ENCODE measurements at regions of chr1 and their contacts with region 1.

Region 1: GRCh38 chr1:8913111-8913856 is 32.4 kb upstream of the CA6 start:
- DNase-seq: no peak
- H3K4me3 ChIP-seq: no peak overlapping the region
- H3K4me3 Mint-ChIP-seq: no peak overlapping the region
- H3K27ac ChIP-seq: no peak overlapping the region
- H3K27ac Mint-ChIP-seq: peak overlapping the region in 1 of 7 donors; percentile 25
- H3K4me1 ChIP-seq: peaks cover 6 to 14% of the 10 kb centered on the region in 2 donors
- H3K4me1 Mint-ChIP-seq: peaks cover 20% of the 10 kb centered on the region
- H3K27me3 ChIP-seq: no peaks in the 10 kb centered on the region
- H3K27me3 Mint-ChIP-seq: peaks cover 0 to 4% (median 2%) of the 10 kb centered on the region in 3 donors
- CTCF ChIP-seq: no peak

Region 2: DNA sequence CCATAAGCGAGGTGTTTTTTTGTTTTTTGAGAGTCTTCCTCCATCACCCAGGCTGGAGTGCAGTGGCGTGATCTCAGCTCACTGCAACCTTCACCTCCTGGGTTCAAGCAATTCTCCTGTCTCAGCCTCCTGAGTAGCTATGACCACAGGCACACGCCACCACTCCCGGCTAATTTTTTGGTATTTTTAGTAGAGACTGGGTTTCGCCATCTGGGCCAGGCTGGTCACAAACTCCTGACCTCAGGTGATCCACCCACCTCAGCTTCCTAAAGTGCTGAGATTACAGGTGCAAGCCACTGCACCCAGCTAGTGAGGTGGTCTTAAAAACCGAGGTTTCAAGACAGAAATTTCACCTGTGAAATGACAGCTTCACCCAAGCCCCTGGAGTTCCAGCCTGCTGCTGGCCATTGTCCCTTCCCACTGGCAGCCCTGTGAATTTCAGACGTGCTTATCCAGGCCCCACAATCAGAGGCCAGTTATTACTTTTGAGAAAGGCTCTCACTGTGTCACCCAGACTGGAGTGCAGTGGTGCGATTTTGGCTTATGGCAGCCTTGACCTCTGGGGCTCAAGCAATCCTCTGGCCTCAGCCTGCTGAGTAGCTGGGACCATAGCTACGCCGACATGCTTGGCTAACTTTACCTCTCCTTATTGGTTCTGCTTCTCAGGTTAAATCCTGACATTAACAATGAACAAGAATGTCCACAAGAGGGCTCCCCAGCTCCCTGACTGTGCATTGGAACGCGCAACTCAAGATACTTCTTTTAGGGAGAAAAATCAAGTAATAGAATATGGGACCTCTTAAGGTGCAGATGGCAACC is 54.2 kb before region 1 on chr1:
- intact Hi-C with region 1: loop called in 1 of 2 experiments (anchors 2 kb)
- DNase-seq: peak; percentile 59 to 78 (median 64)
- H3K4me3 ChIP-seq: no peak overlapping the region
- H3K4me3 Mint-ChIP-seq: no peak overlapping the region
- H3K27ac ChIP-seq: peak overlapping the region; percentile 21 to 49
- H3K27ac Mint-ChIP-seq: peak overlapping the region; percentile 19 to 86 (median 76)
- H3K4me1 ChIP-seq: peaks cover 5 to 7% of the 10 kb centered on the region in 2 donors
- H3K4me1 Mint-ChIP-seq: peaks cover 20% of the 10 kb centered on the region
- H3K27me3 ChIP-seq: no peaks in the 10 kb centered on the region
- H3K27me3 Mint-ChIP-seq: no peaks in the 10 kb centered on the region
- CTCF ChIP-seq: peak; percentile 78

Region 3: DNA sequence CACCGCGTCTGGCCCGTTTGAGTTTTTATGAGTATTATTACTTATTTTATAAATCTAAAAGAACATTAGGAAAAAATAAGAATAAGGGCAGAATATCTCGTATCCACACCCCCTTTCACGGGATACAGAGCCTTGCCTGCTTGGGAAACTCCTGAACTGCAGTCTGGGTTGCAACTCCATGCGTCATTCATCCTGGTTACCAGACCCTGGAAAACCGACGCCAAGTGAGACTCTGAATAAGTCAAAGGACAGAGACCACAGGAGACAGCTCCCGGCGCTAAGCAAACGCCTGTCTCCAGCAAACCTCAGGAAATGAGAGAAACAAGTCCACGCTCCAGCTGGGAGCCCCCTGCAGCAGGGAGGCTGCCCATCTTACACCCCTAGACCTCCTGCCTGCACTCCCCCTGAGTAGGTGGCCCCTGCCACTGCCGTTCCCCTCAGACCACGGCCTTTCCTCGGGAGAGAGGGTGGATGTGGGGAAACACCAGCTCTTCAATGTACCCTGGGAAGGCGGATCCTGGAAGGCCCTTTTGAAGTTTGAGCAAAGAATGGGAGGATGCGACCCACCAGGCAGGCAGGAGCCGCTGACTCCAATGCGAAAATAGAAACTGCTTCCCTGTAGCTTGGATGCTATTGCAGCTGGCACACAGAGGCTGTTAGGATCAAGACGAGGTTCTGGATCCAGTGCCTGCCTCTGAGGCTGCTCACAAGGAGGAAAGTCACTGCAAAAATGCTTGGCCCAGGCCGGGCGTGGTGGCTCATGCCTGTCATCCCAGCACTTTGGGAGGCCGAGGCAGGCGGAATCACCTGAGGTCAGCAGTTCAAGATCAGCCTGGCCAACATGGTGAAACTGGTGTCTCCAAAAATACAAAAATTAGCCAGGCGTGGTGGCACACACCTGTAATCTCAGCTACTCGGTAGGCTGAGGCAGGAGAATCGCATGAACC is 253.3 kb after region 1 on chr1:
- intact Hi-C with region 1: no loop called
- DNase-seq: no peak
- H3K4me3 ChIP-seq: no peak overlapping the region
- H3K4me3 Mint-ChIP-seq: no peak overlapping the region
- H3K27ac ChIP-seq: no peak overlapping the region
- H3K27ac Mint-ChIP-seq: no peak overlapping the region
- H3K4me1 ChIP-seq: peaks cover 30 to 34% of the 10 kb centered on the region in 2 donors
- H3K4me1 Mint-ChIP-seq: peaks cover 26% of the 10 kb centered on the region
- H3K27me3 ChIP-seq: no peaks in the 10 kb centered on the region
- H3K27me3 Mint-ChIP-seq: peaks cover 1 to 10% (median 2%) of the 10 kb centered on the region in 3 donors
- CTCF ChIP-seq: no peak

Measured in CD14-positive monocyte (primary cell).